ENCODE measurements at regions of chr20 and their contacts with region 1.

Region 1: DNA sequence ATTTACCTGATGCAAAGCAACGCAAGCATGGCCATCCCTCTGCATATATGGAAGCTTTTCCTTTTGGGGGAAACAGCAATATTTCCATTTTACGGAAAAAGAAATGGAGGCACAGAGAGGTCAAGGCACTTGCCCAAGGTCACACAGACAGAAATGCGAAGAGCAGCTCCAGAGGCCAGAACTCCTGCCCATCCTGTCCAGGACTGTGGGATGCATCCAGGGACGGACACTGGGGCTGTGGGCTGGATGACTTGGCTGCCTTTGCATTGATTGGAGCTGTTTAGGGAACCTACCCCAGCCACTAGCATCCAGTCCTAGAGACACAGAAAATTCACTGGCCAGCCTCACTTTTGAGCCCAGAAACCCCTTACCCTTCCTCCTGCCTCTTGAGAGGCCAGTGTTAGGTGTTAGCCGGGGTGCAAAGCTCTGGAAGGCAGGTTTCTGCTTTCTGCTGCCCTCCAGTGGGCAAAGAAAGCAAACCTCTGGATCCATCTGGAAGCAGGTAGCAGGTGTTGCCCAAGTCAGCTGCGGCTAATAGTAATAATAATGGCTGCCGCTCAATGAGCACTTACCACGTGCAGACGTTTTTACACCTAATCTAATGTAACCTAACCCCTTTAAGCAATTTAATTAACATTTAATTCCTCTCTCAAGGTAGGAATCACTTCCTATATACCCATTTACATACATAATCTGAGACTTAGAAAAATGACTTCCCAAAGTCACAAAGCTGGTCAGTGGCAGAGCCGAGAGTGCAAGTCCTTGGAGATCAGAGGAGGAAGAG is 31.7 kb upstream of the CCN5 start:
- DNase-seq: peak in 8 of 9 experiments; percentile 10 to 76 (median 59)
- ATAC-seq: peak; percentile 81
- H3K4me3 ChIP-seq: no peak overlapping the region
- H3K4me3 Mint-ChIP-seq: no peak overlapping the region
- H3K27ac ChIP-seq: no peak overlapping the region
- H3K27ac Mint-ChIP-seq: no peak overlapping the region
- H3K4me1 ChIP-seq: peaks cover 4% of the 10 kb centered on the region
- H3K4me1 Mint-ChIP-seq: peaks cover 9% of the 10 kb centered on the region
- H3K27me3 ChIP-seq: no peaks in the 10 kb centered on the region
- H3K27me3 Mint-ChIP-seq: peaks cover 9% of the 10 kb centered on the region
- CTCF ChIP-seq: peak; percentile 54

Region 2: DNA sequence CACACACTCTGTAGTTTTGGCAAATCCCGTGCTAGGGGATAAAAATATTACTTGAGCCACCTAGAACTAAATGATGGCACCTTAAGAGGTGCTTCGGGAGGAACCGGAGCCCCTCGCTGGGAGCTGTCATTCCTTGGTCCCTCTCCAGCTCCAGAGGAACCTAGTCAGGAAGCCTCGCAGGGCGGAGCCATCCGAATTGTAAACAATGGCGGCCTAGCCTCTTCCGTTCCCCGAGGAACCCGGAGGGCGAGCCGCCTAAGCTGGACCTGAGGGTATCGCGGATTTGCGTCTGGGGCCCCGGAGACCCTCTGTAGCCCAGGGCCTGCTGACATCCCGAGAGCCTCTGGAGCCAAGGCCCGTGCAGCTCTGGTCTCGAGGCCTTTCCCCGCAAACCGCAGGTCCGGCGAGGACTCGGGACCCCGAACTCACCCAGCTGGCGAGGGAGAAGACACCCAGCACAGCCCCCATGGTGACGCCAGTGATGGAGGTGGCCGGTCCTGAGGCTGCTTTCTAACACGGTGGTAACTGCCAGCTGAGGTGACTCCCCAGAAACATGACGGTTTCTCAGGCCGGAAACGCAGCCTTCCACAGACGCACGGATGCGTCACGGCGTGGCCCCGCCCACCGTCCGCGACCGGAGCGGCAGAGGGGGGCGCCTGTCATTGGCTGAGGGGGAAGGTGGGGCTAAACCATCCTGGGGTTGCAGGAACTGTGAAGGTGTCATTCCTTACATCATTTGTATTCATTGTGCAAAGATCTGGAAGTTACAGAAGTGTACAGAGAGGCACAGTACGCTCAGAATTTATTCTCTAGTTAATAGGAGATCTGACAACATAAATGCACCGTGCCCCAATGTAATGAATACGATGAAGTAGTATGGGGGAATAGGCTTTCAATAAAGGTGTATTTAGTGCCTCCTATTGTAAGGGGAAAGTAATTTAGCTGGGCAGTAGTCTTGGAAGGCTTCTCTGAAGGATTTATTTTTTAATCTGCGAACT is 161.7 kb before region 1 on chr20 and contains the start of gene SERINC3:
- CTCF ChIA-PET with region 1: interaction called, 5 read pairs
- POLR2A ChIA-PET with region 1: no interaction called
- intact Hi-C with region 1: loop called in 1 of 2 experiments (anchors 5 kb)
- DNase-seq: peak; percentile 96 to 99 (median 98)
- ATAC-seq: peak; percentile 93
- H3K4me3 ChIP-seq: peak within 1 kb of the TSS; percentile 88 to 100
- H3K4me3 Mint-ChIP-seq: peak within 1 kb of the TSS; percentile 86
- H3K27ac ChIP-seq: peak within 1 kb of the TSS; percentile 98 to 100
- H3K27ac Mint-ChIP-seq: peak within 1 kb of the TSS; percentile 96
- H3K4me1 ChIP-seq: peaks cover 52% of the 10 kb centered on the region
- H3K4me1 Mint-ChIP-seq: peaks cover 55% of the 10 kb centered on the region
- H3K27me3 ChIP-seq: no peaks in the 10 kb centered on the region
- H3K27me3 Mint-ChIP-seq: no peaks in the 10 kb centered on the region
- CTCF ChIP-seq: no peak
- total RNA-seq, gene SERINC3: 39.0 to 46.0 TPM

Region 3: GRCh38 chr20:44615169-44615791 is 68.2 kb before region 1 on chr20:
- CTCF ChIA-PET with region 1: interaction called, 42 read pairs
- POLR2A ChIA-PET with region 1: interaction called, 4 read pairs
- intact Hi-C with region 1: loop called (anchors 1 to 5 kb)
- DNase-seq: peak in 5 of 9 experiments; percentile 22 to 61 (median 31)
- ATAC-seq: no peak
- H3K4me3 ChIP-seq: peak overlapping the region in 1 of 2 experiments; percentile 2
- H3K4me3 Mint-ChIP-seq: peak overlapping the region; percentile 61
- H3K27ac ChIP-seq: peak overlapping the region; percentile 53 to 75
- H3K27ac Mint-ChIP-seq: peak overlapping the region; percentile 98
- H3K4me1 ChIP-seq: peaks cover 82% of the 10 kb centered on the region
- H3K4me1 Mint-ChIP-seq: peaks cover 76% of the 10 kb centered on the region
- H3K27me3 ChIP-seq: no peaks in the 10 kb centered on the region
- H3K27me3 Mint-ChIP-seq: no peaks in the 10 kb centered on the region
- CTCF ChIP-seq: no peak

Region 4: DNA sequence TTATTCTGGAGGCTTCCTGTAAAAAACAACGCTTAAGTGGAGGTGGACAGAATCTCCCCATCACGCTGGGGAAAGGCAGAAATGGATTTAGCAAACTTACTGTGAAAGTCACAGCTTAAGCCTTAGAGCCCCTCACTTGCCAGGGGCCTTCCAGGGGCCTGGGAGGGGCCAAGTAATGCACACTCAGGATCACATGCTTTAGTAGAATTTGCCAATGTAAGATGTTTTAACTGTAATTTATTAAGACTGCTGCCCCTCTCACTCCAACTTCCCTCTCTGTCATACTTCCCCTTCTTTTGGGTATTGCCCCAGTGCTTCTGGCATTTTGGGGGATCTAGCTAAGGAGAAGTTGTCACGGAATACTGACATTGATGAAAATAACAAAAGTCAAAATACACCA is 19.3 kb before region 1 on chr20:
- CTCF ChIA-PET with region 1: interaction called, 57 read pairs
- POLR2A ChIA-PET with region 1: interaction called, 3 read pairs
- intact Hi-C with region 1: no loop called
- DNase-seq: no peak
- ATAC-seq: no peak
- H3K4me3 ChIP-seq: no peak overlapping the region
- H3K4me3 Mint-ChIP-seq: no peak overlapping the region
- H3K27ac ChIP-seq: no peak overlapping the region
- H3K27ac Mint-ChIP-seq: no peak overlapping the region
- H3K4me1 ChIP-seq: peaks cover 10% of the 10 kb centered on the region
- H3K4me1 Mint-ChIP-seq: peaks cover 29% of the 10 kb centered on the region
- H3K27me3 ChIP-seq: no peaks in the 10 kb centered on the region
- H3K27me3 Mint-ChIP-seq: no peaks in the 10 kb centered on the region
- CTCF ChIP-seq: no peak

Region 5: DNA sequence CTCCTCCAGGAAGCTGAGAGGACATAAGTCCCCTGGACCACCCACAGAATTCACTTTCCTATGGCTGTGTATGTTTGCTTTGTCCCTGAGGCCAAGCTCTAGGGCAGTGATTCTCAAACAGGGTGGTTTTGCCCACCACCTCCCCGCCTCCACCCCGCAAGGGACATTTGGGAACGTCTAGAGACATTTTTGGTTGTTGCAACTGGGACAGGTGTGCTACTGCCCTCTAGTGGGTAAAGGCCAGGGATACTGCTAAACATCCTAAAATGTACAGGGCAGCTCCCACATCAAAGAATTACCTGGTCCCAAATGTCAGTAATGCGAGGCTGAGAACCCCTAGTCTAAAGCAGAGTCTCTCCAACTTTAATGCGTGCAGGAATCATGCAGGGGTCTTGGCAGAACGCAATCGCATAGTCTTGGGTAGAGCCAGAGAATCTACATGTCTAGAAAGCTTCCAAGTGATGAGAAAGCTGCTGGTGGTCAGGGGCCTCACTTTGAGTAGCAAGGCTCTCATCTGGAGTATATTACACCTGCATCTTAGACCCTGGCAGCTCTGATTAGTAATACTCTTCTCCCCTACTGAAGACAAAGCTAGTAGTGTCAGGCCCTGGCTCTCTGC is 412.4 kb after region 1 on chr20:
- CTCF ChIA-PET with region 1: interaction called, 8 read pairs
- POLR2A ChIA-PET with region 1: no interaction called
- intact Hi-C with region 1: loop called in 1 of 2 experiments (anchors 10 kb)
- DNase-seq: peak; percentile 18 to 78 (median 62)
- ATAC-seq: peak; percentile 69
- H3K4me3 ChIP-seq: no peak overlapping the region
- H3K4me3 Mint-ChIP-seq: no peak overlapping the region
- H3K27ac ChIP-seq: no peak overlapping the region
- H3K27ac Mint-ChIP-seq: no peak overlapping the region
- H3K4me1 ChIP-seq: peaks cover 10% of the 10 kb centered on the region
- H3K4me1 Mint-ChIP-seq: peaks cover 17% of the 10 kb centered on the region
- H3K27me3 ChIP-seq: peaks cover 2 to 16% of the 10 kb centered on the region in 2 experiments
- H3K27me3 Mint-ChIP-seq: peaks cover 28% of the 10 kb centered on the region
- CTCF ChIP-seq: peak; percentile 74